Right ventricle myocardium inferior (tissue), 1 donor: ENCODE measurements at regions of chr2 and their contacts with region 1.

Region 1: DNA sequence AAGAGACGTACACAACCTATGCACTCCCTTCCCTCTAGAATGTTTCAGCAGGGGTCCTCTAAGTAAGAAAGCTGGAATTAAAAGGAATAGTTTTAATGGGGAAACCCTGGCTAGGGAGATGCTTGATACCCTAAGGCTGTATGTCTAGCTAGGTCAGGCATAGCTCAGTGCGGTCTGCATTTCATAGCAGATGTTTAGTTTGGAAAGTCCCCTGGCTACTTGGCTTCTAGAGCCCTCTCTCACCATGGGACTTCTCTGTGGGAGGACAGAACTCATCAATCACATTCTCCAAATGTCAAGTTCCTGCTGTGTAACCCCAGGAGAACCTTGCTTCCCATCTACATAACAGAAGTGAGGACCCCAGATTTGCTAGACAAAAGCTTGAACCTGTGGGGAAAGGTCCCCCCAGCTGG is 24.1 kb upstream of the ANXA4 start:
- DNase-seq: no peak
- ATAC-seq: no peak

Region 2: DNA sequence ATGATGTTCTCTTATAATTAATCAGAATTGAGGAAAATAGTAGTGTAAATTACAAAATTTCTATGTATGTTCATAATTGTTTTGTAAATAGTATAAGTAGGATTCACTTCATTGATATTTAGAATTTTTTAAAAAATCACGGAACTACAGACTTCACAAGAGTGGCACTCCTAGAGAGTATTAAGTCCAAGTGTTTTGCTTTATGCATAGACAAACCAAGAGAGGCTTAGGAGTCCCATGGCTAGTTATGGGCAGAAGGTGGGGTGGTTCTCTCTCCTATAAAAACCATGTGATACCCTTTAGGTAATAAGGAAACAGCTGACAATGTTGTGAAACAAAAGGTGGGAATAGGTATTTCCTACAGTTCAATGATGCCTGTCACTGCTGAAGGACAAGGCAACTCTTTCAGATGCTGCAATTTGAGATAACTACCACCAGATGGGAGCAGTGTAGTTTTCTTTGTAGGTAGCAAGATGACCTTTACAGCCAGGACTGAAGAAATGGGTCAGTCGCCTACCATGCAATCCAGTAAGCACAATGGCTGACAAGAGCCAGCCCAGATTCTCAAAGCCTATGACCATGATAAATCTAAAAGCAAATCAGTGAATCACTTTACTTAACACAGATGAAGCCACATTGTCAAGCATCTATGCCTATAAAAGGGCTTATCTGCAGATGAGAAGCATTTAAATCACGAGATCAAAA is 158.3 kb before region 1 on chr2:
- intact Hi-C with region 1: loop called (anchors 1 kb)
- DNase-seq: no peak
- ATAC-seq: peak; percentile 79

Region 3: GRCh38 chr2:69734035-69734631 is 16.3 kb after region 1 on chr2:
- intact Hi-C with region 1: no loop called
- DNase-seq: no peak
- ATAC-seq: peak; percentile 26

Region 4: GRCh38 chr2:69837533-69837932 is 119.7 kb after region 1 on chr2:
- intact Hi-C with region 1: no loop called
- DNase-seq: no peak
- ATAC-seq: no peak